PC-3 (cell line): ENCODE measurements at regions of chr20 and their contacts with region 1.

Region 1: GRCh38 chr20:36745927-36746659 is at the start of gene NDRG3:
- DNase-seq: peak; percentile 94
- ATAC-seq: peak; percentile 94
- H3K4me3 ChIP-seq: peak within 1 kb of the TSS; percentile 86
- H3K27ac ChIP-seq: peak within 1 kb of the TSS; percentile 34
- H3K4me1 ChIP-seq: peaks cover 7% of the 10 kb centered on the region; the same call in 1 of the 2 replicates
- H3K27me3 ChIP-seq: no peaks in the 10 kb centered on the region
- CTCF ChIP-seq: no peak
- total RNA-seq, gene NDRG3: 27.0 and 30.1 TPM in 2 replicates

Region 2: GRCh38 chr20:36728986-36729385 is 17.1 kb before region 1 on chr20:
- CTCF ChIA-PET with region 1: interaction called, 8 read pairs
- POLR2A ChIA-PET with region 1: no interaction called
- intact Hi-C with region 1: loop called (anchors 1 kb)
- DNase-seq: peak; percentile 55
- ATAC-seq: peak; percentile 25; the same call in 1 of the 2 replicates
- H3K4me3 ChIP-seq: no peak overlapping the region
- H3K27ac ChIP-seq: no peak overlapping the region
- H3K4me1 ChIP-seq: peaks cover 9% of the 10 kb centered on the region
- H3K27me3 ChIP-seq: no peaks in the 10 kb centered on the region
- CTCF ChIP-seq: peak; percentile 57; the same call in 1 of the 2 replicates

Region 3: GRCh38 chr20:36773597-36774390 is 27.7 kb after region 1 on chr20 and contains the start of gene DSN1:
- CTCF ChIA-PET with region 1: interaction called, 3 read pairs
- POLR2A ChIA-PET with region 1: interaction called, 3 read pairs
- intact Hi-C with region 1: loop called (anchors 1 kb)
- DNase-seq: peak; percentile 99
- ATAC-seq: peak; percentile 83
- H3K4me3 ChIP-seq: peak within 1 kb of the TSS; percentile 82
- H3K27ac ChIP-seq: peak within 1 kb of the TSS; percentile 83
- H3K4me1 ChIP-seq: peaks cover 18% of the 10 kb centered on the region
- H3K27me3 ChIP-seq: no peaks in the 10 kb centered on the region
- CTCF ChIP-seq: peak; percentile 89; the same call in 1 of the 2 replicates
- total RNA-seq, gene DSN1: 36.3 and 39.8 TPM in 2 replicates